ENCODE measurements at regions of chr17 and their contacts with region 1.

Region 1: DNA sequence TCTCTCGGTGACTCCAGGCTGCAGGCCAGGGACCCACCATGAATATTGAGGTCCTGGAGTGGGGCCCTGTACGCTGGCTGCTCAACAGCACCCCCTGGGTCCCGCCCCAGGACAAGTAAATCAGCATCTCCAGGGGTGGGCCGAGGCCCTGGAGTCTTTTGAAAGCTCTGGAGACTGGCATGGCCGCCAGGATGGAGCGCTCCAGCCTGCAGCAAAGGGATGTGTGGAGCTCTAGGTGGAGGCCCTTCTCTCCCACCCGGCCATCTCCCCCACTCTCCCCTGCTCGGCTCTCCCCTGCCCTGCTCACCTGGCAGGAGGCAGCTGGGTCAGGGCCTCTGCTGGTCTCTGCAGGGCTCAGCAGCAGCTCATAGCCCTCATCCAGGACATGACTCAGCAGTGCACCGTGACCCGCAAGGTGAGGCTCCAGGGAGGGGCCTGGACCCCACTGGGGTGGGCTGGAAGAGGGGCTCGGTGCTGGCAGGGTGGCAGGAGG is 16.6 kb downstream of the SGSH start:
- DNase-seq: no peak
- H3K4me3 ChIP-seq: no peak overlapping the region
- H3K27ac ChIP-seq: no peak overlapping the region
- H3K4me1 ChIP-seq: no peaks in the 10 kb centered on the region; a peak in 1 of 7 replicates
- H3K27me3 ChIP-seq: no peaks in the 10 kb centered on the region
- CTCF ChIP-seq: peak in 1 of 3 experiments; percentile 15; a peak in 1 of 4 replicates
- EP300 ChIP-seq: no peak
- POLR2A ChIP-seq: no peak
- RAD21 ChIP-seq: no peak; a peak in 1 of 4 replicates

Region 2: DNA sequence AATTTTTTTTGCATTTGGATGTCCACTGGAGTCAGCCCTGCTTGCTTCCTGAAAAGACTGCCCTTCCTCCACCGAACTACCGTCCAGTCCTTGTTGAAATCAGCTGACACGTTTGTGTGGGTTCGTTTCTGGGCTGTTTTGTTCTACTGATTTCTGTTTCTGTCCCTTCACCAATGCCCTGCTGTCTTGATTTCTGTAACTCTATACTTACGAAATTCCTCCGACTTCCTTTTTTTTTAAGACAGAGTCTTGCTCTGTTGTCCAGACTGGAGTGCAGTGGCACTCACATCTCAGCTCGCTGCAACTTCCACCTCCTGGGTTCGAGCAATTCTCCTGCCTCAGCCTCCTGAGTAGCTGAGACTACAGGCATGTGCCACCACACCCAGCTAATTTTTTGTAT is 110.6 kb before region 1 on chr17:
- CTCF ChIA-PET with region 1: no interaction called
- POLR2A ChIA-PET with region 1: no interaction called
- DNase-seq: no peak
- H3K4me3 ChIP-seq: no peak overlapping the region
- H3K27ac ChIP-seq: no peak overlapping the region
- H3K4me1 ChIP-seq: no peaks in the 10 kb centered on the region; a peak in 1 of 7 replicates
- H3K27me3 ChIP-seq: no peaks in the 10 kb centered on the region
- CTCF ChIP-seq: no peak
- EP300 ChIP-seq: no peak
- POLR2A ChIP-seq: no peak
- RAD21 ChIP-seq: no peak

Region 3: GRCh38 chr17:80243526-80244433 is 40.3 kb after region 1 on chr17:
- CTCF ChIA-PET with region 1: no interaction called
- POLR2A ChIA-PET with region 1: no interaction called
- DNase-seq: no peak
- H3K4me3 ChIP-seq: no peak overlapping the region
- H3K27ac ChIP-seq: no peak overlapping the region
- H3K4me1 ChIP-seq: no peaks in the 10 kb centered on the region
- H3K27me3 ChIP-seq: no peaks in the 10 kb centered on the region
- CTCF ChIP-seq: no peak
- EP300 ChIP-seq: no peak
- POLR2A ChIP-seq: no peak
- RAD21 ChIP-seq: no peak

Region 4: DNA sequence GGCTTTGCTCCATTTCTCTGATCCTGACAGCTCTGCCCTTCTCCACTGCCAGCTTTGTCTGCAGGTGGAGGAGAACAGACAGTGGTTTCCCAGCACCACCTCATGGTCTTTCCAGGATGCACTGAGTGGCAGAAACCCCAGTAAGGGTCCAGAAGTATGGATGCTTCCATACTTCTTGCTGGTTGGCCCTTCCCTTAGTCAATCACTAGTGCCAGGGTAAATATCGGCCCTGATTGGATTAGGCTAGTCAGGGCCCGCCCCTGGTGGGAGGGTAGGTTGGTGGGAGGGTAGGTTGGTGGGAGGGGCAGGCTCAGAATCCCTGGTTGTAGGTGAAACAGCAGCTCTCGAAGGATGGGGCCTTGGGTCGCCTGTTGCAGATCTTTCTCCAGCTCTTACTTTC is 67.3 kb after region 1 on chr17:
- CTCF ChIA-PET with region 1: interaction called, 11 read pairs
- POLR2A ChIA-PET with region 1: interaction called, 3 read pairs
- DNase-seq: peak; percentile 34 to 90
- H3K4me3 ChIP-seq: peak overlapping the region in 1 of 4 experiments; percentile 33; a peak in 1 of 8 replicates
- H3K27ac ChIP-seq: no peak overlapping the region
- H3K4me1 ChIP-seq: peaks cover 7 to 14% (median 8%) of the 10 kb centered on the region in 4 experiments
- H3K27me3 ChIP-seq: no peaks in the 10 kb centered on the region
- CTCF ChIP-seq: no peak
- EP300 ChIP-seq: no peak
- POLR2A ChIP-seq: no peak
- RAD21 ChIP-seq: peak; percentile 29 to 34; a peak in 3 of 4 replicates

Region 5: GRCh38 chr17:80290156-80290555 is 86.6 kb after region 1 on chr17:
- CTCF ChIA-PET with region 1: no interaction called
- POLR2A ChIA-PET with region 1: no interaction called
- DNase-seq: no peak
- H3K4me3 ChIP-seq: no peak overlapping the region
- H3K27ac ChIP-seq: no peak overlapping the region
- H3K4me1 ChIP-seq: no peaks in the 10 kb centered on the region
- H3K27me3 ChIP-seq: no peaks in the 10 kb centered on the region; a peak in 1 of 7 replicates
- CTCF ChIP-seq: no peak
- EP300 ChIP-seq: no peak
- POLR2A ChIP-seq: no peak
- RAD21 ChIP-seq: no peak

Measured in H1 (cell line).